ENCODE measurements at regions of chr5 and their contacts with region 1.

Region 1: GRCh38 chr5:134873987-134874830 is at the start of gene TXNDC15:
- DNase-seq: peak; percentile 88
- ATAC-seq: peak; percentile 89
- H3K4me3 Mint-ChIP-seq: peak within 1 kb of the TSS; percentile 92
- H3K27ac Mint-ChIP-seq: peak within 1 kb of the TSS; percentile 90
- H3K4me1 Mint-ChIP-seq: peaks cover 28% of the 10 kb centered on the region
- H3K27me3 Mint-ChIP-seq: no peaks in the 10 kb centered on the region
- total RNA-seq, gene TXNDC15: 37.7 to 41.1 TPM

Region 2: DNA sequence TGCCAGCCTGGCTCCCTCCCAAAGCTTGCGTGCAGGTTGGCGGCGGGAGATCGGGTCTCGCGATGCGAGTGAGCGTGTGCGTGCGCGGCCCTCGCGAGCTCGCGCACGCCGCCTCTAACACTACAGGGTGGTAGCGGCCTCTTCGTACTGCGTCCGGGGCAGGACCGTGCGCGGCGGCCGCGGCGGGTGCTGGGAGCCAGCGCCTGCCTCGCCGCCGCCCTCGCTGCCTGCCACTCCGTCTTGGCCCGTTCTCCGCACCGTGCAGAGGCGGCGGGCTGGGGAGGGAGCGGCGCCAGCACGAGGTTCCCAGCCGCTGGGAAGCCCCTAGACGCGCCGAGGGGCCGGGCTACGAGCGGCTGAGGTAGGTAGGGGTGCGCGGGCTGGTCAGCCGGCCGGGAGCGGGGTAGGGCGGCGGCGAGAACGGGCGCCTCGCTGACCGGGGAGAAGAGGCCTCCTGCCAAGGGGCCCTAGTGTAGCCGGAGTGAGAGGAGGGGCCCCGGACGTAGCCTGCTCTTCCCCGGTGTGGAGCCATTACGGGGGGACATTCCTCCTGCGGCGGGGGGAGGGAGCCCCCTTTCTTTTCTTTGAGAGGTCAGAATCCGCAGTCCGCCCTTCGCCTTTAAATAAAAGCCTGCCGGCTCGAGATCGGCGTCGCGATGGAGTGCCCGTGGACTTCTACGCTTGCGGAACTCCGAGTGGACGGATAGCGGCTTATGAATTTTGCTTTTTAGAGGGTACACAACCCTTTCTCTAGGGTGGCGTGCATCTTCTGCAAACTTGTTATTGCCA is 28.2 kb before region 1 on chr5 and contains the start of gene C5orf24:
- POLR2A ChIA-PET with region 1: interaction called, 16 read pairs
- DNase-seq: peak; percentile 92
- ATAC-seq: peak; percentile 95
- H3K4me3 Mint-ChIP-seq: peak within 1 kb of the TSS; percentile 94
- H3K27ac Mint-ChIP-seq: peak within 1 kb of the TSS; percentile 90
- H3K4me1 Mint-ChIP-seq: peaks cover 18% of the 10 kb centered on the region
- H3K27me3 Mint-ChIP-seq: no peaks in the 10 kb centered on the region
- total RNA-seq, gene C5orf24: 32.4 to 37.0 TPM

Region 3: GRCh38 chr5:134958765-134959168 is 84.6 kb after region 1 on chr5:
- POLR2A ChIA-PET with region 1: no interaction called
- DNase-seq: no peak
- ATAC-seq: no peak
- H3K4me3 Mint-ChIP-seq: no peak overlapping the region
- H3K27ac Mint-ChIP-seq: no peak overlapping the region
- H3K4me1 Mint-ChIP-seq: peaks cover 10% of the 10 kb centered on the region
- H3K27me3 Mint-ChIP-seq: no peaks in the 10 kb centered on the region

Region 4: GRCh38 chr5:135053278-135053677 is 179.1 kb after region 1 on chr5:
- POLR2A ChIA-PET with region 1: no interaction called
- DNase-seq: no peak
- ATAC-seq: peak; percentile 57
- H3K4me3 Mint-ChIP-seq: no peak overlapping the region
- H3K27ac Mint-ChIP-seq: no peak overlapping the region
- H3K4me1 Mint-ChIP-seq: peaks cover 6% of the 10 kb centered on the region
- H3K27me3 Mint-ChIP-seq: peaks cover 64% of the 10 kb centered on the region